Natural killer cell (primary cell): ENCODE measurements at regions of chrX and their contacts with region 1.

Region 1: DNA sequence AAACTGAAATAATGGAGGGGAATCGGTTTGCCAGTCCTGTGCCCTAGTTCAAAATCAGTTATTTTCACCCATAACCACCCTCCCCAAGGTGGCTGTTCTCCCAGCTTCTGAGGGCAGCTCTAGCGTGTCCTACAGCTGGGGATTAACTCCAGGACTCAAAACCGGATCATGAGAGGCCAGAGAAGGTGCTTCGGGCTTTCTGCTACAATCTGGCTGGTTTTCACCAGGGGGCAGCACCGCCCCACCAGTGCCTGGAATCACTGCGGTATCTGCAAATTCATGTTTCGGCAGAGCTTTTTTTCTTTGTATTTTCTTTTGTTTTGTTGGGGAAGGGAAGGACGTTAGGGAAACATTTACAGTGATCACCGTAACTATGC is 28.4 kb downstream of the PDHA1 start:
- DNase-seq: peak; percentile 51 to 76
- ATAC-seq: peak; percentile 79 to 88 (median 84)
- H3K4me3 ChIP-seq: peak overlapping the region; percentile 29
- H3K4me3 Mint-ChIP-seq: peak overlapping the region; percentile 95
- H3K27ac ChIP-seq: no peak overlapping the region
- H3K27ac Mint-ChIP-seq: peak overlapping the region in 1 of 2 donors; percentile 17
- H3K4me1 ChIP-seq: peaks cover 14% of the 10 kb centered on the region
- H3K4me1 Mint-ChIP-seq: peaks cover 7 to 9% of the 10 kb centered on the region in 2 donors
- H3K27me3 ChIP-seq: no peaks in the 10 kb centered on the region
- H3K27me3 Mint-ChIP-seq: no peaks in the 10 kb centered on the region
- CTCF ChIP-seq: peak; percentile 67

Region 2: DNA sequence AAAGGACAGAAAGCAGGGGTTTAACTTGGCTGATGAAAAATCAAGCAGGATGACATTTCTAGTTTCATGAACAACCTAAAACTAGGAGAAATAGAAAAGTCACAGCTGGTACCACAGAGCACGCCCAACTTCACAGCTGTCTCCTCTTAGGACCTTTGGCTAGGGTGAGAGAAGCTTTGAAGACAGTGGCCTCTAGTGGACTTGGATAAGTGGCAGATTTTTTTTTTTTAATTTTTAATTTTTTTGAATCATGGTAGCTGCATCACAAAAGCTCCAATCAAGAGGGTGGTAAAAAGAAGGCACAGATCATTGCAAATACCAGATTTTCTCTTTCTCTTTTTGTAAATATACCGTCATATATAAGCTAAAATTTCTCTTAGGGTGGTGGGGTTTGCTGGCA is 163.3 kb after region 1 on chrX:
- intact Hi-C with region 1: loop called (anchors 10 kb)
- DNase-seq: no peak
- ATAC-seq: peak in 1 of 3 donors; percentile 45
- H3K4me3 ChIP-seq: no peak overlapping the region
- H3K4me3 Mint-ChIP-seq: no peak overlapping the region
- H3K27ac ChIP-seq: no peak overlapping the region
- H3K27ac Mint-ChIP-seq: no peak overlapping the region
- H3K4me1 ChIP-seq: no peaks in the 10 kb centered on the region
- H3K4me1 Mint-ChIP-seq: peaks cover 0 to 5% of the 10 kb centered on the region in 2 donors
- H3K27me3 ChIP-seq: no peaks in the 10 kb centered on the region
- H3K27me3 Mint-ChIP-seq: no peaks in the 10 kb centered on the region
- CTCF ChIP-seq: no peak

Region 3: DNA sequence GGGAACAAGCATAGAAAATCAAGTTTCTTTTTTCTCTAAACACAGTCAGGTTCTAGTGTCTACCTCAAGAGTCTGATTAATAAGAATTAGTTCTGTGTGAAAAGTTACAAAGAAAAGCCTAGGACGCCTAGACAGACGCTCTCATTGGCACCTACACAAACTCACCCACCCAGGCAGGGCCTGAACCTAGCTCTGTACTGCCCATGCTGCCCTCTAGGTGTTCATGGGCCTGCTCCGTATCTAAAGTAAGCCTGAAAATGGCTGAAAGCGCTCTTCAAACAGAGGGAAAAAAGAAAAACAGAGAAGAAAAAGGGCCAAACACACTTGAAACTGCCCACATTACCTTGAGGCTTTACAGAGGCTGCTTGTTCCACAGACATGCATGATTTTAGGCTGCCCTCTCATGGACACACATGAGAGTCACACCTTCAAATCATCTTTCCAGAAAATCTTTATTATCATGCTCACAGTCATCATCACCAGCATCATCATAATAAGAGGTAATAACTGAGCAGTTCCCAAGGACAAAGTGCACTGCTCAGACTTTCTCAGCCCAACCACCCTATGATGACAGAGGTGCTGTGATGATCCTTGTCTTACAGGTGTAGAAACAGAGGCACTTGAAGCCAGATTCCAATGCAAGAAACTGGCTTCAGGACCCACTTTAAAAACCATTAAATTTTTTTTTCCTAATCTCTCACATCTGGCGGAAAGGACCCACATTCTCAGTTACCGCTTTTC is 695.0 kb after region 1 on chrX:
- intact Hi-C with region 1: loop called (anchors 1 kb)
- DNase-seq: peak in 1 of 2 donors; percentile 60
- ATAC-seq: peak; percentile 47 to 72 (median 61)
- H3K4me3 ChIP-seq: no peak overlapping the region
- H3K4me3 Mint-ChIP-seq: no peak overlapping the region
- H3K27ac ChIP-seq: no peak overlapping the region
- H3K27ac Mint-ChIP-seq: no peak overlapping the region
- H3K4me1 ChIP-seq: no peaks in the 10 kb centered on the region
- H3K4me1 Mint-ChIP-seq: no peaks in the 10 kb centered on the region
- H3K27me3 ChIP-seq: no peaks in the 10 kb centered on the region
- H3K27me3 Mint-ChIP-seq: peaks cover 0 to 5% of the 10 kb centered on the region in 2 donors
- CTCF ChIP-seq: no peak